Heart right ventricle (tissue), 16 donors: ENCODE measurements at regions of chr2 and their contacts with region 1.

Region 1: GRCh38 chr2:207289295-207290018 is 123.7 kb upstream of the KLF7 start:
- DNase-seq: no peak
- ATAC-seq: no peak
- H3K4me3 ChIP-seq: no peak overlapping the region
- H3K27ac ChIP-seq: no peak overlapping the region
- H3K4me1 ChIP-seq: peaks cover 0 to 29% (median 24%) of the 10 kb centered on the region in 9 donors
- H3K27me3 ChIP-seq: no peaks in the 10 kb centered on the region
- CTCF ChIP-seq: no peak

Region 2: GRCh38 chr2:207223051-207223450 is 66.4 kb before region 1 on chr2:
- intact Hi-C with region 1: no loop called
- DNase-seq: no peak
- ATAC-seq: no peak
- H3K4me3 ChIP-seq: no peak overlapping the region
- H3K27ac ChIP-seq: no peak overlapping the region
- H3K4me1 ChIP-seq: peaks cover 0 to 41% (median 38%) of the 10 kb centered on the region in 9 donors
- H3K27me3 ChIP-seq: no peaks in the 10 kb centered on the region
- CTCF ChIP-seq: no peak

Region 3: DNA sequence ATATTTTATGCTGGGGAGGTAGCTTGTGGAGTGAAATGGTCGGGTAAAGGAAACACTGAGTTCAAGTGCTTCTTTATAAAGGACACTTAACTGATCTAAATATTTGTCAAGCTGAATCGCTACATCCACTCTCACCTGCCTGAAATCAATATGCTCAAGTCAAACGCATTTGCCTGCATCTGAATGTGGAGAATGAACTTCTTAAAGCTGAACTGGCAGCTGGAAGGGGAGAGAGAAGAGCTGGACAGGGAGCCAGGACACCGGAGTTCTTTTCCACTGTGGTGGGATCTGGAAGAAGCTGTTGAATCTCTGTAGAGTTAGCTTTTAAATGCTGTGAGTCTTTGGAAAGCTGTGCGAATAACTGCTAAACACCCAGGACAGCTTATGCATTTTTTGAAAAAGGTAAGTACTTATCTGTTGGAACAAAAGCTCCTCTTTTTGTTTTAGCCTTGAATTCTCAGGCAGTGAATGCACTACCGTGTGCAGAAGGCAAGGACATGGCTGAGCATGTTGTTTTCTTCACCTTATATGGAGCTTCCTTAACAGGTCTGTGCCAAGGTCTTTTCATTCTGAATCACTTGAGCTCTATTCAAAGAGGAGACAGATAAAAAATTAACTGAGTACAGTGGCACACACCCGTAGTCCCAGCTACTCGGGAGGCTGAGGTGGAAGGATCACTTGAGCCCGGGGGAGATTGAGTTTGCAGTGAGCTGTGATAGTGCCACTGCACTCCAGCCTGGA is 49.5 kb before region 1 on chr2:
- intact Hi-C with region 1: loop called in 1 of 10 experiments (anchors 2 kb)
- DNase-seq: no peak
- ATAC-seq: peak in 4 of 8 donors; percentile 7 to 58 (median 28)
- H3K4me3 ChIP-seq: no peak overlapping the region
- H3K27ac ChIP-seq: peak overlapping the region in 6 of 10 donors; percentile 2 to 84 (median 16)
- H3K4me1 ChIP-seq: peaks cover 4 to 56% (median 15%) of the 10 kb centered on the region in 9 donors
- H3K27me3 ChIP-seq: no peaks in the 10 kb centered on the region
- CTCF ChIP-seq: no peak

Region 4: DNA sequence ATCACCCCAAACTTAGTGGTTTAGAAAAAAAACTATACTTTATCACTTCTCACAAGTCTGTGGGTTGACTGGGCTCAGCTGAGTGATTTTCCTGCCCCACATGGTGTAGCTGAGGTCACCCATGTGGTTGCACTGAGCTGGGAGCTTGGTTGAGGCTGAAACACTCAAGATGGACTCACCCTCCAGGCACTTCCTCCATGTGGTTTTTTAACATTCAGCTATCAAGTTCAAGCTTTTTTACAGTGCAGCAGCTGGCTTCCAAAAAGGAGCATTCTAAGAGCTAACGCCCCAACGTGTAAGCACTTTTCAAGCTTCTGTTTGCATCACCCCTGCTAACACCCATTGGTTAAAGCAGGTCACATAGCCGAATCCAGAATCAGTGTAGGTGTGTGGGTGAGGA is 134.4 kb after region 1 on chr2:
- intact Hi-C with region 1: no loop called
- DNase-seq: no peak
- ATAC-seq: no peak
- H3K4me3 ChIP-seq: no peak overlapping the region
- H3K27ac ChIP-seq: no peak overlapping the region
- H3K4me1 ChIP-seq: no peaks in the 10 kb centered on the region
- H3K27me3 ChIP-seq: no peaks in the 10 kb centered on the region
- CTCF ChIP-seq: no peak